ENCODE measurements at regions of chr17 and their contacts with region 1.

Region 1: GRCh38 chr17:49390548-49391324 is 23.9 kb downstream of the PHB1 start:
- DNase-seq: peak; percentile 35
- H3K4me3 Mint-ChIP-seq: peak overlapping the region; percentile 47
- H3K27ac Mint-ChIP-seq: peak overlapping the region; percentile 94
- H3K4me1 Mint-ChIP-seq: peaks cover 68% of the 10 kb centered on the region
- H3K27me3 Mint-ChIP-seq: no peaks in the 10 kb centered on the region

Region 2: GRCh38 chr17:49277638-49278037 is 113.1 kb before region 1 on chr17:
- CTCF ChIA-PET with region 1: no interaction called
- POLR2A ChIA-PET with region 1: no interaction called
- DNase-seq: no peak
- H3K4me3 Mint-ChIP-seq: no peak overlapping the region
- H3K27ac Mint-ChIP-seq: no peak overlapping the region
- H3K4me1 Mint-ChIP-seq: no peaks in the 10 kb centered on the region
- H3K27me3 Mint-ChIP-seq: no peaks in the 10 kb centered on the region

Region 3: GRCh38 chr17:49315551-49316257 is 75.0 kb before region 1 on chr17:
- CTCF ChIA-PET with region 1: interaction called, 15 read pairs
- POLR2A ChIA-PET with region 1: interaction called, 6 read pairs
- DNase-seq: peak; percentile 84
- H3K4me3 Mint-ChIP-seq: peak overlapping the region; percentile 41
- H3K27ac Mint-ChIP-seq: peak overlapping the region; percentile 79
- H3K4me1 Mint-ChIP-seq: peaks cover 33% of the 10 kb centered on the region
- H3K27me3 Mint-ChIP-seq: no peaks in the 10 kb centered on the region

Region 4: DNA sequence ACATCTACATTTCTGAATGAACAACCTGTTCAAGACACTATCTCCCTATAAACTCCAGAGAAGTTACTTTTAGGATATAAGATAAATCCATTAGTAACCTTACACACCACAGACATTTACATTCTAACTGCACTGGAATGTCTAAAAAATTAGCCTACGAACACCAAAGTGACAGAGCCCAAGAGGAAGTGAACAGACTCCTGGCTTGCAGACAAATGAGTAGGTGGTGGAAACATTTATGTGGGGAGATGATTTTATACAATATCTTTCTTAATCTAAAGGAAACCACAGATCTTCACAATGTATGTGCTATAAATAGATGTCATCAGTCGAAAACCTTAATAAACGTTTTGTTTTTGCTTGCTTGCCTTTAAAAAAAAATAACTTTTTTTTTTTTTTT is 47.5 kb before region 1 on chr17:
- CTCF ChIA-PET with region 1: interaction called, 6 read pairs
- POLR2A ChIA-PET with region 1: interaction called, 11 read pairs
- DNase-seq: no peak
- H3K4me3 Mint-ChIP-seq: peak overlapping the region; percentile 63
- H3K27ac Mint-ChIP-seq: peak overlapping the region; percentile 91
- H3K4me1 Mint-ChIP-seq: peaks cover 72% of the 10 kb centered on the region
- H3K27me3 Mint-ChIP-seq: peaks cover 3% of the 10 kb centered on the region

Region 5: GRCh38 chr17:49361902-49362722 is 28.6 kb before region 1 on chr17 and contains the start of gene ZNF652:
- CTCF ChIA-PET with region 1: interaction called, 22 read pairs
- POLR2A ChIA-PET with region 1: interaction called, 71 read pairs
- DNase-seq: peak; percentile 97
- H3K4me3 Mint-ChIP-seq: peak within 1 kb of the TSS; percentile 95
- H3K27ac Mint-ChIP-seq: peak within 1 kb of the TSS; percentile 95
- H3K4me1 Mint-ChIP-seq: peaks cover 63% of the 10 kb centered on the region
- H3K27me3 Mint-ChIP-seq: no peaks in the 10 kb centered on the region
- total RNA-seq, gene ZNF652: 37.7 to 42.6 TPM

Region 6: DNA sequence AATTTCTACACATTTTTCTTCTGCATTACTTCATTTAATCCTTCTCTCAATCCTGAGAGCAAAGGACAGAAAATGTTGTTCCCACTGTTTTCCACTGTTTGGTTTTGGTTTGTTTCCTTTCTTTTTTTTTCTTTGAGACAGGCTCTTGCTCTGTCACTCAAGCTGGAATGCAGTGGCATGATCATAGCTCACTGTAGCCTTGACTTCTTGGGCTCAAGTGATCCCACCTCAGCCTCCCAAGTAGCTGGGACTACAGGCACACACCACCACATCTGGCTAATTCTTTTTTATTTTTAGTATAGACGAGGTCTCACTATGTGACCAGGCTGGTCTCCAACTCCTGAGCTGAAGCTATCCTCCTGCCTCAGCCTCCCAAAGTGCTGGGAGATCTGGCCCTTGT is 21.6 kb before region 1 on chr17:
- CTCF ChIA-PET with region 1: interaction called, 22 read pairs
- POLR2A ChIA-PET with region 1: interaction called, 71 read pairs
- DNase-seq: no peak
- H3K4me3 Mint-ChIP-seq: no peak overlapping the region
- H3K27ac Mint-ChIP-seq: no peak overlapping the region
- H3K4me1 Mint-ChIP-seq: peaks cover 27% of the 10 kb centered on the region
- H3K27me3 Mint-ChIP-seq: no peaks in the 10 kb centered on the region

Region 7: DNA sequence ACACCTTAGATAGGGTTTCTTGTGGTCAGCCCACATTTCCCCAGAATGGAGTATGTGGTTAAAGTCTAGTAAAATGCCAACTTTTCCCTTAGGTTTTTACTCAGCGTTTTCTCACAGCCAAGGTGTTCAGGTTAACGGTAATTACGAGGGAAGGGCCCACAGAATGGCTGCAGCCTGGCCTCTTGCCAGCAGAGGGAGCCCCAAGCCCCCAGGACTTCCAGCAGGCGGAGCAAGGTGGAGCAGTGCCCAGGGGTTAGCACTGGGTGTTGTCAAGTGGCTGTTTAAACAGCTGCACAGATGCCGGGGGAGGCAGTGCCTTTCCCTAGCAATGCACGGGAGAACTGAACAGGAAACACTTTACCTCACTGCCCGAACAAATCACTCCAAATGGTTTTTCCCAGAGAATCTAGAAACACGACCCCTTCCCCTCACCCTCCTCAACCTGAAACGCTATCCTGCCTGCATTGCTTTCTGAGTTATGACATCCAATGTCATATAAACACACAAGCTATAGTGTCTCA is 17.3 kb after region 1 on chr17:
- CTCF ChIA-PET with region 1: interaction called, 22 read pairs
- POLR2A ChIA-PET with region 1: no interaction called
- DNase-seq: peak; percentile 87
- H3K4me3 Mint-ChIP-seq: no peak overlapping the region
- H3K27ac Mint-ChIP-seq: peak overlapping the region; percentile 35
- H3K4me1 Mint-ChIP-seq: peaks cover 34% of the 10 kb centered on the region
- H3K27me3 Mint-ChIP-seq: no peaks in the 10 kb centered on the region

Region 8: GRCh38 chr17:49486012-49486641 is 95.4 kb after region 1 on chr17:
- CTCF ChIA-PET with region 1: no interaction called
- POLR2A ChIA-PET with region 1: no interaction called
- DNase-seq: no peak
- H3K4me3 Mint-ChIP-seq: no peak overlapping the region
- H3K27ac Mint-ChIP-seq: no peak overlapping the region
- H3K4me1 Mint-ChIP-seq: no peaks in the 10 kb centered on the region
- H3K27me3 Mint-ChIP-seq: peaks cover 64% of the 10 kb centered on the region

Measured in activated CD4-positive, alpha-beta memory T cell treated with anti-CD3 and anti-CD28 coated beads, Interleukin-2, amount 10 ng/mL, durations not matched to agents 7 days and 5 days (primary cell).